ENCODE measurements at regions of chr1 and their contacts with region 1.

Region 1: DNA sequence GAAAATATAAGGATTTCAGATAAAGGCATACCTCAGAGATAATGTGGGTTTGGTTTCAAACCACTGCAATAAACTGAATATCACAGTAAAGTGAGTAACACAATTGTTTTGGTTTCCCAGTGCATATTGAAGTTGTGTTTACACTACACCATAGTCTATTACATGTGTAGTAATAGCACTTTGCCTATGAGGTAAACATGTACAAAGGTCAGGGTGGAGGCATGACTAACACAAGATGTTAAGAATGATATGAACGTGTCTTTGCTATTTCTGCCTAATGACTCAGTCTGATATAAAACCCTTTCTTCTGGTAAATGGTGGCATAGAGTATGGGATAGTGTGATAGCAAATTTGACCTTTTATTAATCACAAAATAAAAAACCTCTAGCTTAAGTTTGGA is 621.5 kb upstream of the ADGRL2 start:
- DNase-seq: peak; percentile 92
- H3K4me3 ChIP-seq: no peak overlapping the region
- H3K27ac ChIP-seq: peak overlapping the region; percentile 49
- H3K4me1 ChIP-seq: peaks cover 28% of the 10 kb centered on the region
- H3K27me3 ChIP-seq: no peaks in the 10 kb centered on the region
- CTCF ChIP-seq: no peak

Region 2: GRCh38 chr1:81118550-81118949 is 60.7 kb before region 1 on chr1:
- CTCF ChIA-PET with region 1: no interaction called
- dilution Hi-C with region 1: no loop called
- in situ Hi-C with region 1: no loop called
- intact Hi-C with region 1: loop called (anchors 2 kb)
- DNase-seq: peak; percentile 54
- H3K4me3 ChIP-seq: no peak overlapping the region
- H3K27ac ChIP-seq: no peak overlapping the region
- H3K4me1 ChIP-seq: peaks cover 21% of the 10 kb centered on the region
- H3K27me3 ChIP-seq: no peaks in the 10 kb centered on the region
- CTCF ChIP-seq: no peak

Region 3: GRCh38 chr1:81142099-81142776 is 37.0 kb before region 1 on chr1:
- CTCF ChIA-PET with region 1: no interaction called
- dilution Hi-C with region 1: no loop called
- in situ Hi-C with region 1: no loop called
- intact Hi-C with region 1: loop called (anchors 5 kb)
- DNase-seq: peak; percentile 63
- H3K4me3 ChIP-seq: no peak overlapping the region
- H3K27ac ChIP-seq: no peak overlapping the region
- H3K4me1 ChIP-seq: peaks cover 10% of the 10 kb centered on the region
- H3K27me3 ChIP-seq: no peaks in the 10 kb centered on the region
- CTCF ChIP-seq: no peak

Region 4: DNA sequence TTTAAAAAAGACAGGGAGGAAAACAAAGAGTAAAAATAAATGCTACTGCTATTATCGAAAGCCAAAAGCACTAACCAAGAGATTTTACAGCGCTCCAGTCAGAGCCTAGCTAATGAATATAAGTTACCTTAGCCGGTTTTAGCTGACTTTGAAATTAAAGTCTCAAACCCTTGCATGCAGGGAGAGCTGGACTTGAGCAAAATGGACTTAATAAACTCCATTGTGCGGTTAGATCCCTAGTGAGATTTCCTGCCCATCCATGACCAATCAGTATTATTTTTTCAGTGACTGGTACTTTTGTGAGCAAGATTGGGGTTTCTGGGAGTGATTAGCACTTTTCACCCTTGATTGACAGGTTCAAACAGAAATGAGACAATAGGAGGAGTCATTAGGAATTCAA is 288.1 kb after region 1 on chr1:
- CTCF ChIA-PET with region 1: no interaction called
- dilution Hi-C with region 1: no loop called
- in situ Hi-C with region 1: no loop called
- intact Hi-C with region 1: no loop called
- DNase-seq: no peak
- H3K4me3 ChIP-seq: no peak overlapping the region
- H3K27ac ChIP-seq: no peak overlapping the region
- H3K4me1 ChIP-seq: no peaks in the 10 kb centered on the region
- H3K27me3 ChIP-seq: no peaks in the 10 kb centered on the region
- CTCF ChIP-seq: no peak

Measured in mammary epithelial cell (primary cell).